B cell (primary cell): ENCODE measurements at regions of chr11 and their contacts with region 1.

Region 1: DNA sequence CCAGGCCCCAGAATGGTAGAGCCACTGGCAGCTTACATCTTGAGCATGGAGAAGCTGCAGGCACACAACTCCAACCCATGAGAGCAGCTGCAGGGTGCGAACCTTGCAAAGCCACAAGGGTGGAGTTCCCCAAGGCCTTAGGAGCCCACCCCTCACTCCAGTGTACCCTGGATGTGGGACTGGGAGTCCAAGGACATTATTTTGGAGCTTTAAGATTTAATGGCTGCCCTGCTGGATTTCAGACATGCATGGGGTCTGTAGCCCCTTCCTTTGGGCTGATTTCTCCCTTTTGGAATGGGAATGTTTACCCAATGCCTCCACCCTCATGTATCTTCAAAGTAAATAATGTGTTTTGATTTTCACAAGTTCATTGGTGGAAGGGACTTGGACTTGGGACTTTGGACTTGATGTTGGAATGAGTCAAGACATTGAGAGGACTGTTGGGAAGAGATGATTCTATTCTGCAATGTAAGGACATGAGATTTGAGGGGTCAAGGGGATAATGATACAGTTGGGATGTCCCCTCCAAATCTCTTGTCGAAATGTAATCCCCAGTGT is 1.1 kb upstream of the KRTAP5-7 start:
- DNase-seq: no peak
- ATAC-seq: no peak
- H3K4me3 ChIP-seq: no peak overlapping the region
- H3K4me3 Mint-ChIP-seq: no peak overlapping the region
- H3K27ac ChIP-seq: no peak overlapping the region
- H3K27ac Mint-ChIP-seq: no peak overlapping the region
- H3K4me1 ChIP-seq: no peaks in the 10 kb centered on the region
- H3K4me1 Mint-ChIP-seq: peaks cover 4% of the 10 kb centered on the region
- H3K27me3 ChIP-seq: peaks cover 0 to 3% (median 0%) of the 10 kb centered on the region in 4 experiments
- H3K27me3 Mint-ChIP-seq: peaks cover 11% of the 10 kb centered on the region
- CTCF ChIP-seq: no peak

Region 2: GRCh38 chr11:71563401-71563800 is 37.4 kb after region 1 on chr11:
- CTCF ChIA-PET with region 1: no interaction called
- POLR2A ChIA-PET with region 1: no interaction called
- intact Hi-C with region 1: loop called (anchors 1 kb)
- DNase-seq: peak; percentile 41
- ATAC-seq: no peak
- H3K4me3 ChIP-seq: no peak overlapping the region
- H3K4me3 Mint-ChIP-seq: no peak overlapping the region
- H3K27ac ChIP-seq: no peak overlapping the region
- H3K27ac Mint-ChIP-seq: no peak overlapping the region
- H3K4me1 ChIP-seq: peaks cover 0 to 4% of the 10 kb centered on the region in 2 donors
- H3K4me1 Mint-ChIP-seq: no peaks in the 10 kb centered on the region
- H3K27me3 ChIP-seq: peaks cover 0 to 16% (median 11%) of the 10 kb centered on the region in 4 experiments
- H3K27me3 Mint-ChIP-seq: peaks cover 45% of the 10 kb centered on the region
- CTCF ChIP-seq: peak; percentile 14

Region 3: GRCh38 chr11:71580057-71581003 is 54.3 kb after region 1 on chr11:
- CTCF ChIA-PET with region 1: no interaction called
- POLR2A ChIA-PET with region 1: no interaction called
- intact Hi-C with region 1: no loop called
- DNase-seq: peak; percentile 30
- ATAC-seq: no peak
- H3K4me3 ChIP-seq: no peak overlapping the region
- H3K4me3 Mint-ChIP-seq: no peak overlapping the region
- H3K27ac ChIP-seq: no peak overlapping the region
- H3K27ac Mint-ChIP-seq: no peak overlapping the region
- H3K4me1 ChIP-seq: peaks cover 0 to 2% of the 10 kb centered on the region in 2 donors
- H3K4me1 Mint-ChIP-seq: peaks cover 3% of the 10 kb centered on the region
- H3K27me3 ChIP-seq: peaks cover 0 to 12% (median 0%) of the 10 kb centered on the region in 4 experiments
- H3K27me3 Mint-ChIP-seq: peaks cover 33% of the 10 kb centered on the region
- CTCF ChIP-seq: peak; percentile 75